Mammary epithelial cell (primary cell): ENCODE measurements at regions of chr20 and their contacts with region 1.

Region 1: DNA sequence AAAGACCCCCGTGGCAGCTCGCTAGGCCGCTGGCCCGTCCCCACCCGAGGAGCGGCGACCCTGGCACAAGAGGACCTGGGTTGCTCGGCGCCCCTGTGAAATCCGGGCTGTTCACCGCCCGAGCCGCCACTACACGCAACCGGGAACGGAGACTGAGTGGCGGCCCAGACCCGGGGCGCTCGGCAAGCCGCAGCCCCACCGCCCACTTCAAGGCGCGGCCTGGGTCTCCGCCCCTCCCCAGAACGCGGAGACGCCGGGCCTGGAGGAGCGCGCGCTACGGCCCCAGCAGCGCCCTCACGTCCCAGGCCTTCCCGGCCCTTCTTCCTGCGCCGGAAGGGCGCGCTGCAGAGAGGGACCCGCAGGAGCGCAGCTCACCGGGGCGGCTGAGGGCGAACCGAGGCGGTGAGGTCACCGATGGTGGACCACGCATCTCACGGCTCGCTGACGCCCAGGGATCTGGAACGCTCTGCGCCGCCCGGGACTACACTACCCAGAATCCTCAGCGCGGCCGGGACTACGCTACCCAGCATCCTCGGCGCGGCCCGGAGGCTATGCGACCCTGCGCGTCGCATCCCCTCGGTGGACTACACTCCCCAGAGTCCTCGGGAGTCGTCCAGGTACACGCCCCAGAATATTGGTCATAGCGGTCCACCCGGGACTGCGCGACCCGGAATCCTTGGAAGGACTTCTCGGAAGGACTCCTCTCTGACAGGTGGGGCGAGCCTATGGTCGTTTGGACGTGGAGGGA is at the start of gene ZNF337:
- DNase-seq: peak; percentile 95
- H3K4me3 ChIP-seq: peak within 1 kb of the TSS; percentile 75 to 92 (median 91)
- H3K27ac ChIP-seq: peak within 1 kb of the TSS; percentile 79
- H3K4me1 ChIP-seq: no peaks in the 10 kb centered on the region
- H3K27me3 ChIP-seq: no peaks in the 10 kb centered on the region
- CTCF ChIP-seq: peak in 1 of 2 donors; percentile 38
- total RNA-seq, gene ZNF337: 13.7 to 22.1 TPM

Region 2: GRCh38 chr20:25160467-25160866 is 536.1 kb before region 1 on chr20:
- CTCF ChIA-PET with region 1: no interaction called
- dilution Hi-C with region 1: no loop called
- in situ Hi-C with region 1: no loop called
- intact Hi-C with region 1: no loop called
- DNase-seq: no peak
- H3K4me3 ChIP-seq: no peak overlapping the region
- H3K27ac ChIP-seq: no peak overlapping the region
- H3K4me1 ChIP-seq: no peaks in the 10 kb centered on the region
- H3K27me3 ChIP-seq: peaks cover 5% of the 10 kb centered on the region
- CTCF ChIP-seq: no peak

Region 3: DNA sequence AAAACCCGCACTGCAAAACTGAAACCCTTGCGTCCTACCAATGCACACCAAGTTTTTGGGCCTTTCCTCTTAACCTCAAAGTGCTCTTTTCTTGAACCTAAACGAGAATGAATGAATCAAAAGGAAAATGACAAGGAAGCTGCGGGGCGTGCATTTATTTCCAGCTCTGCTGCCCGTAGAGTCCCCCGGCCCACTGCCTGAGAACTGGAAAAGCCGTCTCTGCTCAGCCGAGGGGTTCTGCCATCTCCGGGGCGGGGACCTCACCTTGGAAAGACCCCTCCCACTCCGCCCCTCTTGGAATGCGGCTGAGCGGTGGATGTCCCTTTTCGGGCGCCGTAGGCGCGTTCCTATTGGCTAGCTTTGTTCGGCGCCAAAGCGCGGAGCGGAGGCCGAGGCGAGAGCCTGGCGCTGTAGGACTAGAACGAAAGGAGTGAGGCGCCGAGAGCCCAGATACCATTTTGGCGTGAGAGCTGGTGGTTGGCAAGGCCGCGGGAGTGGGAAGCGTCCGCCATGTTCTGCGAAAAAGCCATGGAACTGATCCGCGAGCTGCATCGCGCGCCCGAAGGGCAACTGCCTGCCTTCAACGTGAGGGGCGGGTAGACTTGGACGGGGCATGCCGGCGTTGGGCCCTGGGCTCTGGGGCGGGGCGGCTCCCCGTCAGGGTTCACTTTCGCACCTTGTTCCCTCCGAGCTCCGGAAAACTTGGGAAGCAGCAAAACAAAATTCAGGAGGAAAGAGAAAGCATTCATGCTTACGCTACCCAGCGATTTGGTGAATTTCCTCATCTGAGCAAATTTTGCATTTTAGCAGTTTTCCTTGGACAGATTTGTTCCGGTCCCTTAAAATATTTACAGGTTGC is 289.0 kb before region 1 on chr20 and contains the start of gene GINS1:
- CTCF ChIA-PET with region 1: no interaction called
- dilution Hi-C with region 1: no loop called
- in situ Hi-C with region 1: no loop called
- intact Hi-C with region 1: loop called (anchors 10 kb)
- DNase-seq: peak; percentile 89
- H3K4me3 ChIP-seq: peak within 1 kb of the TSS; percentile 77 to 82 (median 78)
- H3K27ac ChIP-seq: peak within 1 kb of the TSS; percentile 73
- H3K4me1 ChIP-seq: peaks cover 11% of the 10 kb centered on the region
- H3K27me3 ChIP-seq: no peaks in the 10 kb centered on the region
- CTCF ChIP-seq: no peak
- total RNA-seq, gene GINS1: 5.7 to 16.8 TPM

Region 4: GRCh38 chr20:25437153-25437581 is 259.4 kb before region 1 on chr20:
- CTCF ChIA-PET with region 1: no interaction called
- dilution Hi-C with region 1: no loop called
- in situ Hi-C with region 1: loop called in 1 of 2 experiments (anchors 25 kb)
- intact Hi-C with region 1: no loop called
- DNase-seq: peak; percentile 8
- H3K4me3 ChIP-seq: no peak overlapping the region
- H3K27ac ChIP-seq: no peak overlapping the region
- H3K4me1 ChIP-seq: peaks cover 6% of the 10 kb centered on the region
- H3K27me3 ChIP-seq: no peaks in the 10 kb centered on the region
- CTCF ChIP-seq: no peak

Region 5: DNA sequence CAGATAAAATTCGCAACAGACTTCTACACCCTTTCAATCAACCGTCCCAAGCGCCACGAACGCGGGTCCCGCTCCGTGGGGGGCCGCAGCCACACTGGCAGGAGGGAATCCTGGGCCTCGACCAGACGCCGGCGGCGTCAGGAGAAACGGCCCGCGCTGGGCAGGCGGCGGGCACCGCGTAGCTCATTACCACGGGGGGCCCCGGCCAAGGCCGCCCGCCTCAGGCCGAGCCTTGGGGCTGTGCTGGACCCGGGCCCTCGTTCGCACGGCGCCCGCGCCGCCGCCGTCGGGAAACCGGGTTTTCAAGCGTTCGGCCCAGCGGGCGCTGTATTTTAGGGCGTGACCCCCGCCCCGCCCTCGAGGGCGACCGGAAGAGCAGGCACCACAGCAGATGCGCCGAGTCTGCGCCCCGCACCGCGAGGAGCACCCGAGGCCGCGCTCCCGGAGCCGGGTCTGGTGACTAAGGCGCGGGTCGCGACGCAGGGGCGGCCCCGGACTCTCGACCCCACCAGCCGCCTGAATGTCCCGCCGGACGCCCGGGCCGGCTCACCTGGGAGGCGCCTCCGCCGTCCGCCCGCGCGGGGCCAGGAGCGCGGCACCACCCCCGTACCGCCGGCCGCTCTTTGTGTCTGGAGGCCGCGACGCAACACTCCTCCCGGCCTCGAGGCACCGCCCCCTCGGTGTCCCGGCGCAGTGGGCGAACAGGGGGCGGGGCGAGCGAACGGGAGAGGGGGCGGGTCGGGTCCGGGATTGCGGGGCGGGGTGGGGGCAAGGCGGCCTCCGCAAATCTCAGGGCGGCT is 111.5 kb before region 1 on chr20 and contains the start of gene NINL:
- CTCF ChIA-PET with region 1: no interaction called
- dilution Hi-C with region 1: no loop called
- in situ Hi-C with region 1: no loop called
- intact Hi-C with region 1: loop called (anchors 10 kb)
- DNase-seq: peak; percentile 41
- H3K4me3 ChIP-seq: peak within 1 kb of the TSS; percentile 63 to 70 (median 65)
- H3K27ac ChIP-seq: no peak within 1 kb of the TSS
- H3K4me1 ChIP-seq: no peaks in the 10 kb centered on the region
- H3K27me3 ChIP-seq: no peaks in the 10 kb centered on the region
- CTCF ChIP-seq: no peak
- total RNA-seq, gene NINL: 6.8 to 7.7 TPM

Region 6: DNA sequence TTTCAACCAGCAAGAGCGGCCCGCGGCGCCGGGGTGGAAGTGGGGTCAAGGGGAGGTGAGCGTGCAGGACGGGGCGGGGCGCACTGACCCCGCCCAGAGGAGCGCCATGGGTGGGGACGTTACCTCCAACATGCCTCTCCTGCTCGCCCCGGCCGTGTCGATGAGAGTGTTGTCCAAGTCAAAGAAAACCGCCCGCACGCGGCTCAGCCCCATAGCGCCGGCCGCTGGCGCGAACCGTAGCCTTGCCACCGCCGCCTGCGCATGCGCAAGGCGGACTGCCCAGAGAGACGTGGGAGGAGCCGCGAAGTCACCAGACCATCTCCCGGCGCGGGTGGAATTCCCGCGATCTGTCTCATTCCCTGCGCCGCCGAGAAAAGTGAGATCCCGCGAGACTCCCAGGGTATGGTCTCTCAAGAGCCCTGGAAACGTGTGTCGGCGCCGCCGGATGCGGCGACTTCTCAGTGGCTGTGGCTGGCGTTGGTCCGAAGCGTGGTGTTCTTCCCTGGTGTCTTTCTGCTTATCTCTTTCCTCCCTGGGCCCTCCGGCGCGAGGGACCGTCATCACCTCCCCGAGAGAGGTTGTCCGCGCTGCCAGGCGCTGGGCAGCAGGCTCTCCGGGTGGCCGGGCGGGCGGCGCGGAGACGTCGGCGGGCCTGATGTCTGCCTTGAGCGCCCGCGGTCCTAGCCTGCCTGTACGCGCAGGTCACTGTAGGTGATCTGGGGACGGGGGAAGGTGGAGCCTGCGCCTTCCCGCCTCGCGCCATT is 72.6 kb before region 1 on chr20 and contains the start of gene NANP:
- CTCF ChIA-PET with region 1: no interaction called
- dilution Hi-C with region 1: no loop called
- in situ Hi-C with region 1: loop called in 1 of 2 experiments (anchors 5 kb)
- intact Hi-C with region 1: loop called (anchors 1 kb)
- DNase-seq: peak; percentile 98
- H3K4me3 ChIP-seq: peak within 1 kb of the TSS; percentile 53 to 94 (median 87)
- H3K27ac ChIP-seq: peak within 1 kb of the TSS; percentile 83
- H3K4me1 ChIP-seq: peaks cover 18% of the 10 kb centered on the region
- H3K27me3 ChIP-seq: no peaks in the 10 kb centered on the region
- CTCF ChIP-seq: peak in 1 of 2 donors; percentile 25
- total RNA-seq, gene NANP: 7.5 TPM

Region 7: DNA sequence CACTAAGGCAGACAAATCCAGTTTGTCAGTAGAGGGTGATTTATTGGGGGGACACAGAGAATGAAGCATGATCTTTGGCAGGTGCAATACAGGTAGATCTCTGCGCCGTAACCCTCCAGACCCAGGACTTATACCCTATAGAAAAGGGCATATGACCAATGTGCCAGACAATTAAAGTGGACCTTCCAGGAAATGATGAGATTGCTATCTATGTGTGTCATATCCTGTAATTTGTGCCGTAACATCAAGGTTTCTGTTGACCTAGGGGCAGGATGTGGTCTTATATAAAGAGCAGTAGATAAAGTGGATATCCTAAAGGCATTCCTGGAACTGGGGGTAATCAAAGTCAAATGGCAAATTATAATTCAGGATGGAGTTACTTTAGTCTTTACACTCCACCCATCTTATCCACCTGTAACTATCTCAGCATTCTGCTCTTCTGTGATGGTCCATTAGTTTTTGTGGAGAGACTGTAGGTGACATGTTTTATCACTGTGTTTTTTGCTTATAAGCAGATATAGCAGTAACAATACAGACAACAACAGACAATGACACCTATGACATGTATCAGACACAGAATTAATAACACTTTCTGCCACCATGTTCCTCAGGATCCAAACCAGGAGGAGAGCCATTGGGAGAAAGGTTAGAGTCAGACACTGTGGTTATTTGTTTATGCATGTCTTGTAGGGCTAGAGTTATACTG is 43.2 kb after region 1 on chr20:
- CTCF ChIA-PET with region 1: no interaction called
- dilution Hi-C with region 1: no loop called
- in situ Hi-C with region 1: no loop called
- intact Hi-C with region 1: loop called (anchors 1 kb)
- DNase-seq: peak; percentile 46
- H3K4me3 ChIP-seq: no peak overlapping the region
- H3K27ac ChIP-seq: no peak overlapping the region
- H3K4me1 ChIP-seq: peaks cover 8% of the 10 kb centered on the region
- H3K27me3 ChIP-seq: no peaks in the 10 kb centered on the region
- CTCF ChIP-seq: no peak

Region 8: GRCh38 chr20:25865380-25866118 is 169.0 kb after region 1 on chr20:
- CTCF ChIA-PET with region 1: no interaction called
- dilution Hi-C with region 1: no loop called
- in situ Hi-C with region 1: loop called in 1 of 2 experiments (anchors 25 kb)
- intact Hi-C with region 1: no loop called
- DNase-seq: peak; percentile 65
- H3K4me3 ChIP-seq: peak overlapping the region; percentile 24 to 45 (median 40)
- H3K27ac ChIP-seq: no peak overlapping the region
- H3K4me1 ChIP-seq: peaks cover 20% of the 10 kb centered on the region
- H3K27me3 ChIP-seq: no peaks in the 10 kb centered on the region
- CTCF ChIP-seq: no peak